Activated CD8-positive, alpha-beta T cell treated with anti-CD3 and anti-CD28 coated beads for 36 hours (primary cell): ENCODE measurements at regions of chr2 and their contacts with region 1.

Region 1: DNA sequence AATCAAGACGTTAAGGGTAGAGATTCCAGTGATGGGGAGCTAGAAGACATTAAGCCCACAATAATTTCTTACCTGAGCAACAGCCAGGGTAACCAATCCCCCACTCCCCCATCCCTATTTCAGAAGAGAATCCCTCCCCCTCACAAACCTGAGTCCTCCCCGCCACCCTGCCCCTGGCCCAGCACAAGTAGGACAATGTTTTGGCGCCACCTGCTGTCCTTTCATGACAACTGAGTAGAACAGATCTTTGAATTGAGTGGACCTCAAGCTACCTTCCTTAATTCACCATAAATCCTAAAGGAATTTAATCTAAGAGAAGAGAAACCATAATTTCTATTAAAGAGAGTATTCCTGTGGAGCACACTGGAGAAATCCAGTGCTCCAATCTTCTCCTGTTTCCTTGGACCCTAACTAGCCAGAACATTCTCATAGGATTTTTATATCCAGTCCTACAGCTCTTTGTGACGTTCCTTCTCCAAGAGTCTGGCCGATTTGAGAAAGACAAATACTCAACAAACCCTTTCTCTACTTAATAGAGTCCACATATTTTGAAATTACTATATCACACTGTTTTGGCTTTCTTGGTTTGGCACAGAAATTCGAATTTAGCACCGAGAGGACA is 41.1 kb downstream of the NHEJ1 start:
- DNase-seq: peak; percentile 80
- ATAC-seq: peak; percentile 78
- H3K4me3 Mint-ChIP-seq: no peak overlapping the region
- H3K27ac Mint-ChIP-seq: no peak overlapping the region
- H3K4me1 Mint-ChIP-seq: peaks cover 11% of the 10 kb centered on the region
- H3K27me3 Mint-ChIP-seq: no peaks in the 10 kb centered on the region
- CTCF ChIP-seq: peak; percentile 73

Region 2: DNA sequence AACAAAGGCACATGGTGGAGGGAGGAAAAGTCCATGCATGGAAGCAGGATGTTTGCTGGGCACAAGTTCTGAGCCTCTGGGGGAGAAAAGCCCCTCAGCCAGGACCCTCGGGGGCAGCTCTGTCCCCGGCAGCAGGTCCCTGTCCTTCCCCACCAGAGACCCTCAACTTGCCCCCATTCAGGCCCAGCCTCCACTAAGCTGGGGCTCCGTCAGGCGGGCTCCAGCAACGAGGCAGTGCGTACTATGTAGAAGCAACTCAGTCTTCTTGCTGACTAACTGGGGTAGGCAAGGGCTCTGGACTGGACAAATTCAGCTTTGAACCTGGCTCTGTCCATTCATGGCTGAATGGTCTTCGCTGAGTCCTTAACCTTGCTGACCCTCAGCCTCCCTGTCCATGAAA is 101.2 kb before region 1 on chr2:
- CTCF ChIA-PET with region 1: no interaction called
- POLR2A ChIA-PET with region 1: no interaction called
- intact Hi-C with region 1: no loop called
- DNase-seq: no peak
- ATAC-seq: no peak
- H3K4me3 Mint-ChIP-seq: no peak overlapping the region
- H3K27ac Mint-ChIP-seq: no peak overlapping the region
- H3K4me1 Mint-ChIP-seq: no peaks in the 10 kb centered on the region
- H3K27me3 Mint-ChIP-seq: peaks cover 3% of the 10 kb centered on the region
- CTCF ChIP-seq: no peak

Region 3: DNA sequence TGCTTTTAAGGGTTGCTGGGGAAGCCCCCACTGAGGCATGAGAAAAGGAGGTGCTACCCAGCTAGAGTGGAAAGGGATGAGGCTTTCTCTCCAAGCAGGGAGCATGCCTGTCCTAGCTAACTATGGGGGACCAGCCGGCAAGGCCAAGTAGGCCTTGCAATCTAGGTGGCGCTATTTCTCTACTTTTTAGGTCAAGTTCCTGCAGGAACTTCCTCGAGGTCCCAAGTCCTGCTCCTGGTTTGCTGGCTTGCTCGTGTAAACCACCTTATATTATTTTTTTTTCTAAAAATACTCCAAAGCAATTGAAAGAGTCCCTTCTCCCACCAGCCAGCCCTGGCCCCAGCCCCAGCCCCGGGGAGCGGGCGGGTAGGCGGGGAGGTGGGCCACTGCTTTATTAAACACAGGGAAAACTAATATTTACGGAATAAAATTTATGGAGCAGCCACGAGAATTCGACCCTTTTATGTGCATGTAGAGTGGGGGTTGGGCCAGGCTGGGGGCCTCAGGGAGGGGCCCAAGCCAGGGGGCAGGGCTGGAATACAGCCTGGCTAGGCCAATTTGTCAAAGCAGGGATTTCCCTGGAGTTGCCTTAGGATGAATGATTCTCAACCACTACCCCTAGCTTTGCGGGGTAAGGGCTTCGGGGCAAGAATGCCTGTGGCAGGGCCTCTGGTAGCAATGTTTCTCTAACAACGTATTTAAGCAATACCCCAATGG is 46.0 kb before region 1 on chr2:
- CTCF ChIA-PET with region 1: interaction called, 431 read pairs
- POLR2A ChIA-PET with region 1: no interaction called
- intact Hi-C with region 1: loop called (anchors 5 kb)
- DNase-seq: peak; percentile 43
- ATAC-seq: no peak
- H3K4me3 Mint-ChIP-seq: no peak overlapping the region
- H3K27ac Mint-ChIP-seq: no peak overlapping the region
- H3K4me1 Mint-ChIP-seq: no peaks in the 10 kb centered on the region
- H3K27me3 Mint-ChIP-seq: no peaks in the 10 kb centered on the region
- CTCF ChIP-seq: peak; percentile 63

Region 4: GRCh38 chr2:219099329-219099728 is 20.2 kb before region 1 on chr2:
- CTCF ChIA-PET with region 1: interaction called, 71 read pairs
- POLR2A ChIA-PET with region 1: no interaction called
- intact Hi-C with region 1: no loop called
- DNase-seq: no peak
- ATAC-seq: no peak
- H3K4me3 Mint-ChIP-seq: no peak overlapping the region
- H3K27ac Mint-ChIP-seq: no peak overlapping the region
- H3K4me1 Mint-ChIP-seq: peaks cover 4% of the 10 kb centered on the region
- H3K27me3 Mint-ChIP-seq: no peaks in the 10 kb centered on the region
- CTCF ChIP-seq: no peak

Region 5: GRCh38 chr2:219109471-219109870 is 10.1 kb before region 1 on chr2:
- CTCF ChIA-PET with region 1: interaction called, 71 read pairs
- POLR2A ChIA-PET with region 1: no interaction called
- intact Hi-C with region 1: no loop called
- DNase-seq: peak; percentile 93
- ATAC-seq: peak; percentile 96
- H3K4me3 Mint-ChIP-seq: no peak overlapping the region
- H3K27ac Mint-ChIP-seq: peak overlapping the region; percentile 60
- H3K4me1 Mint-ChIP-seq: peaks cover 45% of the 10 kb centered on the region
- H3K27me3 Mint-ChIP-seq: no peaks in the 10 kb centered on the region
- CTCF ChIP-seq: no peak

Region 6: DNA sequence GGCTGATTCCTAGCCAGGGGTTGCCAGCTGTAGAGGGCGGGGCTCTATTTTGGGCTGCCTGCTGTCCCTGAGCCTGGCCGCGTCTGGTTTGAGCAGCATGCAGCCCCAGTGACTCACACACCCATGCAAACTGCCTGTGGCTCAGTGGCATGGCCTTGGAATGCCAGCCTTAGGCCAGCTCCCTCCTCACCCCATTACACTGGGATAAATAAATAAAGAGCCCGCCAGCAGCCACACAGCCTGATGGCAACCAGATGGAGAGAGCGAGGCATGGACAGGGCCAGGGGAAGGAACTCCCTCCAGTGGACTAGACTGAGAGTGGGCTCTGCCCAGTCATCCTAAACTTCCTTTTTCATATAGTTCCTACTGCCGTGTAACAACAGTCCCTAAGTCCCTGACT is 22.8 kb after region 1 on chr2:
- CTCF ChIA-PET with region 1: interaction called, 13 read pairs
- POLR2A ChIA-PET with region 1: no interaction called
- intact Hi-C with region 1: no loop called
- DNase-seq: no peak
- ATAC-seq: no peak
- H3K4me3 Mint-ChIP-seq: no peak overlapping the region
- H3K27ac Mint-ChIP-seq: no peak overlapping the region
- H3K4me1 Mint-ChIP-seq: no peaks in the 10 kb centered on the region
- H3K27me3 Mint-ChIP-seq: no peaks in the 10 kb centered on the region
- CTCF ChIP-seq: no peak

Region 7: GRCh38 chr2:219177552-219178376 is 58.2 kb after region 1 on chr2 and contains the start of gene RETREG2:
- CTCF ChIA-PET with region 1: no interaction called
- POLR2A ChIA-PET with region 1: no interaction called
- intact Hi-C with region 1: no loop called
- DNase-seq: peak; percentile 82
- ATAC-seq: peak; percentile 46
- H3K4me3 Mint-ChIP-seq: peak within 1 kb of the TSS; percentile 97
- H3K27ac Mint-ChIP-seq: peak within 1 kb of the TSS; percentile 97
- H3K4me1 Mint-ChIP-seq: peaks cover 57% of the 10 kb centered on the region
- H3K27me3 Mint-ChIP-seq: no peaks in the 10 kb centered on the region
- CTCF ChIP-seq: peak; percentile 40
- total RNA-seq, gene RETREG2: 63.8 to 67.8 TPM